ENCODE measurements at regions of chr1 and their contacts with region 1.

Region 1: GRCh38 chr1:93304716-93305138 is 41.0 kb upstream of the DR1 start:
- DNase-seq: peak in 1 of 2 donors; percentile 54
- ATAC-seq: peak in 5 of 8 donors; percentile 31 to 65 (median 52)
- H3K4me3 ChIP-seq: no peak overlapping the region
- H3K27ac ChIP-seq: no peak overlapping the region
- H3K4me1 ChIP-seq: peaks cover 0 to 5% (median 0%) of the 10 kb centered on the region in 9 donors
- H3K27me3 ChIP-seq: no peaks in the 10 kb centered on the region
- CTCF ChIP-seq: peak; percentile 84 to 96 (median 89)

Region 2: DNA sequence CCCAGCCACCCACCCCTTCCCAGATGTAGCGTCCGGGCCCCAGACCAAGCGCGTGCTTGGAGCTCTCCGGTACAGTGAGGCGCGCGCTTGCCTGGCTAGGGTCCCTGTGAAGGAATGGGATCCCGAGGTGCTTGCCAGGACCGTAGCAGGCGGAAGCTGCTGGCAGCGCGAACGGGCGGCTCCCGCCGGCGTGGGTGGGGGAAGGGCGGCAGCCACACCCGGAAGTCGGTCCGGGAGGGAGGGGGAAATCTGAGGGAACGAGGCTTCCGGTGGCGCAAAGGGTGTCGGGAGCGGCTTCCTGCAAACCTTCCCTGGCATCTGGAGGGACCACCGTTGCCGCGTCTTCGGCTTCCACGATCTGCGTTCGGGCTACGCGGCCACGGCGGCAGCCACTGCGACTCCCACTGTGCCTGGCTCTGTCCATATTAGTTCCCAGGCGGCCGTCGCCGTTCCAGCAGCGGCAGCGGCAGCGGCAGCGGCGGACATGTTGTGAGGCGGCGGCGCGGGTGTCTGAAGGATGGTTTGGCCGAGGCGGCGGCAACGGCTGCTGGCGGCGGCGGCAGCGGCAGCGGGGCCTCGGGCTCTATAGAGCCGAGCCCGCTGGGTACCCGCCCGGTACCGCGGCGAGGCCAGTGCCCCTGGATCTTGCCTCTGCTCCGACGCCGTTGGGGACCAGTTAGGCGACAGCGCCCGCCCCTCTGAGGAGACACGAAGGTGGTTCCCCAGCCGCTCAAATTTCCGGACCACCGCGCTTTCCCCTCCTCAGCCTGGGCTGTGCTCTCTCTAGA is 41.1 kb after region 1 on chr1 and contains the start of gene DR1:
- intact Hi-C with region 1: loop called in 1 of 10 experiments (anchors 5 kb)
- DNase-seq: peak; percentile 94 to 95
- ATAC-seq: peak; percentile 97 to 99 (median 98)
- H3K4me3 ChIP-seq: peak within 1 kb of the TSS; percentile 80 to 96 (median 92)
- H3K27ac ChIP-seq: peak within 1 kb of the TSS; percentile 89 to 98 (median 94)
- H3K4me1 ChIP-seq: peaks cover 0 to 54% (median 38%) of the 10 kb centered on the region in 9 donors
- H3K27me3 ChIP-seq: no peaks in the 10 kb centered on the region
- CTCF ChIP-seq: no peak
- total RNA-seq, gene DR1: 33.0 to 40.8 (median 37.5) TPM

Region 3: GRCh38 chr1:93358293-93358692 is 53.6 kb after region 1 on chr1:
- intact Hi-C with region 1: no loop called
- DNase-seq: no peak
- ATAC-seq: no peak
- H3K4me3 ChIP-seq: no peak overlapping the region
- H3K27ac ChIP-seq: peak overlapping the region in 1 of 10 donors; percentile 11
- H3K4me1 ChIP-seq: peaks cover 0 to 61% (median 30%) of the 10 kb centered on the region in 9 donors
- H3K27me3 ChIP-seq: no peaks in the 10 kb centered on the region
- CTCF ChIP-seq: no peak

Region 4: DNA sequence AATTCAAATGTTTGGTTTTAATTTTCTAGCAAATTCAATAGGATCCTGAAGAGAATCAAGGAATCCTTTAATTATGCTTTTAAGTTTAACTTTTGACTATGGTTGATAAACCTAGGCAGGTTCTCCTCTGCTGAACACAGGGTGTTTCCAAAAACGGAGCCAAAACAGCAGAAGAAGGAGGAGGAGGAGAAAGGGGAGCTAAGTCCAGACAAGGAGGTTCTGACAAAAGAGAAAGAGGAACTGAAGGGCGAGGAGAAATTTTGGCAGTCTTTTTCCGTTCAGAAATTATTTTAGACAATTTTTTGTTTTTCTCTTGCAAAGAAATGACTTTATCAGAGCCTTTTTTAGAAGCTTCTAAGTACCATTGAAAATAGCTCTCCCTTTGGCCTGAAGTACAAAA is 110.0 kb after region 1 on chr1:
- intact Hi-C with region 1: loop called in 2 of 10 experiments (anchors 5 to 10 kb)
- DNase-seq: no peak
- ATAC-seq: peak in 4 of 8 donors; percentile 14 to 65 (median 38)
- H3K4me3 ChIP-seq: peak overlapping the region in 5 of 10 donors; percentile 18 to 39 (median 31)
- H3K27ac ChIP-seq: peak overlapping the region in 8 of 10 donors; percentile 7 to 75 (median 54)
- H3K4me1 ChIP-seq: peaks cover 0 to 26% (median 12%) of the 10 kb centered on the region in 9 donors
- H3K27me3 ChIP-seq: no peaks in the 10 kb centered on the region
- CTCF ChIP-seq: no peak

Region 5: DNA sequence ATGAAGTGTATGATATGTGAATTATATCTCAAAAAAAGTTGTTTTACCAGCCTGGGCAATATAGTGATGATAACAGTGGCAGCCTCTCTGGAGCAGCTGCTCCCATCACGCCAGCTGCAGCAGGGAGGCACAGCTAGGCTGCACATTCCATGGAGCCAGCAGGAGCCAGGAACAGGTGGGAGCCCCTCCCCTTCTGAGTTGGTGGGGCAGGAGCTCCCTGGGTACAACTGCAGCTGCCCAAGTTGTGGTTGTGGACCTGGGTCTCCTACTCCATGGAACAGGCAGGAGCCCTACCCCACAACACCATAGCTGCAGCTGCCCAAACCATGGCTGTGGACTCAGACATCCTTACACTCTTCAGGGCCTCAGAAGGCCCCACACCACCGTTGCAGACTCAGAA is 121.5 kb after region 1 on chr1:
- intact Hi-C with region 1: loop called in 6 of 10 experiments (anchors 5 to 10 kb)
- DNase-seq: no peak
- ATAC-seq: peak in 1 of 8 donors; percentile 45
- H3K4me3 ChIP-seq: no peak overlapping the region
- H3K27ac ChIP-seq: no peak overlapping the region
- H3K4me1 ChIP-seq: peaks cover 0 to 3% (median 0%) of the 10 kb centered on the region in 9 donors
- H3K27me3 ChIP-seq: no peaks in the 10 kb centered on the region
- CTCF ChIP-seq: no peak

Region 6: DNA sequence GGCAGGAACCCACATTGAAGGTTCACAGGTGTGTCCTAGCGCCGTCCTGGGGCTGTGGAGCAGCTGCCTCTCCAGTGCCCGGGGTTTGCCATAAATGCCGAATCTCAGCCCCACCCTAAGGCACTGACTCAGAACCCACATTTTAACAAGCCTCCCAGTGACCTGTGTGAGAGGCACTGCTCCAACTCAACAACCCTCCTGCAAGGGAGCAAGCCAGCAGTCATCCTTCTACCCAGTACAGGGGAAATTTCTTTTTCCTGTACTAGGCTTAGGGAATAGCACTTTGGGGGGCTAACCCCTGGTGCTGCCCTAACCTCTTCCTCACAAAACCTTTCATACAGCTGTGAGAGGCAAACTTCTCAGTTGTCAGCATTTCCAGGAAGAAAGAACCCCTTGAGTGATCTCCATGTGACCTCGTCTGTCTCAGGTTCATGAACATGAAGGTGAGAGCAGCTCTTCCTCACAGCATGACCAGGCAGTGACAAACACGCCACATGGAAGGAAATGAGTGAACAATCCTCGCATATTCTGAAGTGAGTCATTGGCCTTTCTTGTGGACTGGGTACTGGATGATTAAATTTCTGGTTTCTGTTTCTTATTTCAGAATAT is 388.4 kb after region 1 on chr1:
- intact Hi-C with region 1: no loop called
- DNase-seq: no peak
- ATAC-seq: peak in 1 of 8 donors; percentile 23
- H3K4me3 ChIP-seq: no peak overlapping the region
- H3K27ac ChIP-seq: no peak overlapping the region
- H3K4me1 ChIP-seq: peaks cover 0 to 39% (median 0%) of the 10 kb centered on the region in 9 donors
- H3K27me3 ChIP-seq: no peaks in the 10 kb centered on the region
- CTCF ChIP-seq: no peak

Region 7: DNA sequence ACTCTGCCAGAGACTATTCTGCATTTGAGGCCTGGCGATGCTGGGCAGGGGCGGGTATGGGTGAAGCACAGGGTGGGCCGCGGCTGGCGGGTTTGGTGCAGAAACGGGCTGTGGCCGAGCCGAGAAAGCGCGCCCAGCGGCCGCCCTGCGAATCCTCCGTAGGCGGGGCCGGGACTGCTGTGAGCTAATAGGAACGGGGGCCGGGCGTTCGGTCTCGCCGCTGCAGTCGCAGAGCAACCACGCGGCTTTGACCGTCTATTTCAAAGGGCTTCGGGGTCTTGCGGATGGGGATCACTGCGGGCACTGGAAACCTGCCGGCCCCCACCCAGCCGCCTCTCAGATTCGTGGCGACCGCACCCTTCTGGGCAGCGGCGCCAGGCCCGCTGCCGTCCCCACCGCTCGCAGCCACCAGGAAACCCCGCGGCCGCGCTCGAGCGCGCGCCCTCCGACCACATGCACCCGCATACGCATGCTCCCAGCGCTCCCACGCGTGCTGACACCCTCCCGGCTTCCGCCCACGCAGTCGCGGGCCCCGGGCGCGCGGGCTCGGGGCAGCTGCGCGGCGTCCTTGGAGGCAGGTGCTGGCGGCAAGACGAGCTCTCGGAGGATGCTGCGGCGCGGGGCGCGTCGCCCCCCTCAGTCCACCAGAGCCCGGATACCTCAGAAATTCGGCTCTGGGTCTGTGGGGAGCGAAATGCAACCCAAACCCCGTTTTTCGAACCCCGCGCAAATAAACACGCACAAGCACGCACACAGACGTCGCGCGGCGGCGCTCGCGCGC is 541.7 kb after region 1 on chr1:
- intact Hi-C with region 1: loop called in 8 of 10 experiments (anchors 2 to 10 kb)
- DNase-seq: peak; percentile 89
- ATAC-seq: peak; percentile 64 to 81 (median 76)
- H3K4me3 ChIP-seq: peak overlapping the region; percentile 69 to 93 (median 86)
- H3K27ac ChIP-seq: peak overlapping the region; percentile 86 to 98 (median 96)
- H3K4me1 ChIP-seq: peaks cover 4 to 38% (median 31%) of the 10 kb centered on the region in 9 donors
- H3K27me3 ChIP-seq: no peaks in the 10 kb centered on the region
- CTCF ChIP-seq: peak in 7 of 9 donors; percentile 17 to 57 (median 40)

Measured in heart right ventricle (tissue), 16 donors.